ENCODE measurements at regions of chr12 and their contacts with region 1.

Region 1: GRCh38 chr12:54541751-54542290 is 7.6 kb upstream of the PDE1B start:
- DNase-seq: no peak
- H3K4me3 Mint-ChIP-seq: no peak overlapping the region
- H3K27ac Mint-ChIP-seq: no peak overlapping the region
- H3K4me1 Mint-ChIP-seq: no peaks in the 10 kb centered on the region
- H3K27me3 Mint-ChIP-seq: peaks cover 4% of the 10 kb centered on the region

Region 2: GRCh38 chr12:54509617-54510016 is 32.2 kb before region 1 on chr12:
- CTCF ChIA-PET with region 1: no interaction called
- DNase-seq: no peak
- H3K4me3 Mint-ChIP-seq: no peak overlapping the region
- H3K27ac Mint-ChIP-seq: no peak overlapping the region
- H3K4me1 Mint-ChIP-seq: peaks cover 10% of the 10 kb centered on the region
- H3K27me3 Mint-ChIP-seq: no peaks in the 10 kb centered on the region

Region 3: GRCh38 chr12:54526812-54527630 is 14.8 kb before region 1 on chr12:
- CTCF ChIA-PET with region 1: interaction called, 12 read pairs
- DNase-seq: peak; percentile 50
- H3K4me3 Mint-ChIP-seq: no peak overlapping the region
- H3K27ac Mint-ChIP-seq: peak overlapping the region; percentile 9
- H3K4me1 Mint-ChIP-seq: no peaks in the 10 kb centered on the region
- H3K27me3 Mint-ChIP-seq: no peaks in the 10 kb centered on the region

Measured in activated naive CD4-positive, alpha-beta T cell treated with anti-CD3 and anti-CD28 coated beads, Interleukin-2, amount 10 ng/mL, durations not matched to agents 7 days and 5 days (primary cell).